AG04449 (cell line): ENCODE measurements at regions of chr17 and their contacts with region 1.

Region 1: DNA sequence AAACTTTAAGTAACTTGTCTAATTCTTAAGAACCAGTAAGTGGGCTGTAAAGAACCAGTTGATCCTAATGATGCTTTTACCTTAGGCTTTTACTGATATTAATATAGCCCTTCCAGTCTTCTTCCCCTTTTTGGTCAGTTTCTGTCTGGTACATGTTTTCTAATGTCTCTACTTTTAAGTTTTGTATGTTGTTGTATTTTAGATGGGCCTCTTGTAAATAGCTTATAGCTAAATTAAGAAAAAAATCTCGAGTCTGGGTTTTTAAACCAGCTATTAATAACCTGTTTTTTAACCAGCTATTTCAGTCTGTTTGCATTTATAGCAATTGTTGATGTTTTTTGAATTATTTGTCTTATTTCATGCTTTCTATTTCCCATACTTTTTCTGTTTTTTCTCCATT is 79.0 kb downstream of the PITPNC1 start:
- DNase-seq: no peak
- H3K4me3 ChIP-seq: no peak overlapping the region
- CTCF ChIP-seq: no peak

Region 2: DNA sequence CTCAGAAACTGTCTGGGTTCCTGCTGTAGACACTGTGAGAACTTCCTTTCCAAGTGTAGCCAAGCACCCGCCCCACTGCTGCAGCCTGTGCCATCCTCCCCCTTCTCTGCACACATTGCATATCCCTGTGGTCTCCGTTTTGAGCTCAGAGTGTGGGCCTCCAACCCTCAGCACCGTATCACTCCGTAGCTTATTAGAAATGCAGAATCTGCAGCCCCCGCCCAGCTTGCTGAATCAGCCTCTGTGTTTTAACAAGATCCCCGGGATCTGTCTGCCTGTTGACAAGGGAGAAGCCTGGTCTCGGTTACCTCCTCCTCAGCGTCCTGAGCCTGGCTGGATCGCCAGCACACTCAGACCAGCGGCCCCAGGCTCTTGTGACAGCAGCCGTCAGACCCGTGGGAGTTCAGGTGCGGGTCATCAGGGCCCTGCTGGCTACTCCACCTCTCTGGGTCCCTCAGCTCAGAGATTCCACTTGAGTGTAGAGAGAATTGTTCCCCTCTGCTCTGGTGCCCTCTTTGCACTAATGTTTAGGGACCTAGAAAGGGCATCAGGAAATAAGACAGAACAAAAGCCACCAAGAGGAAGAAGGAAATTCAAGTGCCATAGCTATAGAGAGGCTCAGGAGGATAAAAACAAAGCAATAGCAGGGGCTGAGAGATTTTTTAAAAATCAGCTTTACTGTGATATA is 13.2 kb after region 1 on chr17:
- CTCF ChIA-PET with region 1: interaction called, 10 read pairs
- POLR2A ChIA-PET with region 1: no interaction called
- DNase-seq: no peak
- H3K4me3 ChIP-seq: no peak overlapping the region
- CTCF ChIP-seq: no peak